ENCODE measurements at regions of chr2 and their contacts with region 1.

Region 1: DNA sequence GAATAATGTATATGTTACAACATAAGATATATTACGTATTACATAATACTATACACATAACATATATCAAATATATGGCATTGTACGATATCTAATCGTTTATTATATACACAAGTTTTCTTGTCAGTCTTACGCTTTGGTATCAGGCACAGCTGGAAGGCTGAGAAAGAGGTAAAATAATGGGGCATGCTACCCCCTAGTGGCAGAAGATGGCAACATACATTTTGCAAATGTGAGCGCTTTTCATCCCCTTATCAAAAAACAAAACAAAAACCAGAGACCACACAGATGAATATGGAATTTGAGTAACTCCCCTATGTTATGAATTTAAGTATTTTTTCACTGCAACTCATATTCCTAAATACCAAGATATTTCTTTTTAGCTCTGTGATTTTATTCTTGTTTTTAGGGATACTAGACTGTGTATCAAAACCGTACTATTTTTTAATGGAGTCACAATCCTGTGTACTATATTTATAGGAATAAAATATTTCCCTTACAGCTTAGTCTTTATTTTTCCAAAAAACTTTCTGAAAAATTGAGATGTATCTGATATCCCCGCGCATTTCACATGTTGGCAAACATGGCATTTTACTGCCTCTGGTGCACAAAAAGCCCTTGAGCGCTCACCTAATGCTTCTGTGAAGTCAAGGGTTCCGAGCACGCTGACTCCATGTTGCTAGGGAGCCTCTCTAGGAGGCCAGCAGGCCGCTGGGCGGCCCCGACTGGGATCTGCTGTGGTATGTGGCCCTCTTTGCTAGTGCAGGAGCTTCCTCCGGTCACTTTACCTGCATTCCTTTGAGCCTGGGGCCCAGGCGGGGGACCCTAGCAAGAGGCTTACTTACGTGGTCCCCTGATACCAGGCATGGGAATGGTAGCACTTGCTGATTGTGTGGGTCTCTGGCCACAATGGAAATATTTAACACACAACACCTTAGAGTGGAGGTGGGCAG is 62.5 kb downstream of the SLC4A3 start:
- DNase-seq: peak in 1 of 2 donors; percentile 72
- H3K4me3 ChIP-seq: peak overlapping the region in 1 of 2 donors; percentile 52
- H3K27ac ChIP-seq: peak overlapping the region; percentile 87 to 88
- H3K4me1 ChIP-seq: peaks cover 6 to 30% of the 10 kb centered on the region in 2 donors
- H3K27me3 ChIP-seq: no peaks in the 10 kb centered on the region
- CTCF ChIP-seq: peak; percentile 60 to 74 (median 72)

Region 2: DNA sequence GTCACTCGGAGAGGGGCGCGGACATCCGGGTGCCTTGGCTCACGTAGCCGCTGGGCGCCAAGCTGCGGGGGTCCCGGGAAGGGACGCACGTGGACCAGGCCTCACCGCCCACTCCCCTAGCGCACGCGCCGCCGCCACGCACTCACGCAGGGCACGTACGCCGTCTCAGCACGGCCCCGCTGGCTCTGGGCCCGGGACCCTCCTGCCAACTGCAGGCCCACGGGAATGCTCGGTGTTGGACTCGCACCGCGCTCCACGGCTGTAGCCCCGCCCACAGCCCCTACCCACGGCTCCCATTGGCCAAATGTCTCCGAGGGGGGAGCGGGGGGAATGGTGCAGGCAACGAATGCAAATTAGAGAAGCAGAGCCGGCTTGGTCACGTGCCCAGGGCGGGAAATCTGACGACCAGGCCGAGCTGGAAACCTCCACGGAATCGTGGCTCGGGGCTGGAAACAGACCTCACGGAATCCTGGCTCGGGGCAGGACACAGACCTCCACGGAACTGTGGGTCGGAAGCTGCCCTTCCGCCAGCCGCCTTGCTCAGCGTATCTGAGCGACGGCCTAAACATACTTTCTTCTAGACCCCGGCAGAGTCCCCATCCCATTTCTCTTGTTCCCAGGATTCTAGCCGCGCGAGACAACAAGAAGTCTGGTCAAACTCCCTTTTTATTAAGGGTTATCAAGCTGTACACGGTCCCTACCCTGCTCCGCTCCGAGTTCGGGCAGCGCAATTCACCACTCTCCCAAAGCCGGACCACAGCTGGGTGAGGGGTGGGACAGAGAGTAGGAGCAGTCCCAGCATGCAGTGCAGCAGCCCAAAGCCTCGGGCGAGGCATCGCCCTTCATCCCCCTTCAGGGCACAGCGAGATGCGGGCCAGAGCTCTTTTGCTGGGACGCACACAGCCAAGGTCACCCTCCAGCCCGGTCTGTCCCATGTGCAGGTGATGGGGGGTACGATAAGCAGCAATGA is 470.9 kb before region 1 on chr2 and contains the start of gene ABCB6:
- intact Hi-C with region 1: loop called (anchors 10 kb)
- DNase-seq: peak; percentile 93 to 99
- H3K4me3 ChIP-seq: peak within 1 kb of the TSS; percentile 64 to 68
- H3K27ac ChIP-seq: peak within 1 kb of the TSS; percentile 92 to 95
- H3K4me1 ChIP-seq: peaks cover 12 to 31% of the 10 kb centered on the region in 2 donors
- H3K27me3 ChIP-seq: no peaks in the 10 kb centered on the region
- CTCF ChIP-seq: no peak
- total RNA-seq, gene ABCB6: 17.9 TPM

Region 3: DNA sequence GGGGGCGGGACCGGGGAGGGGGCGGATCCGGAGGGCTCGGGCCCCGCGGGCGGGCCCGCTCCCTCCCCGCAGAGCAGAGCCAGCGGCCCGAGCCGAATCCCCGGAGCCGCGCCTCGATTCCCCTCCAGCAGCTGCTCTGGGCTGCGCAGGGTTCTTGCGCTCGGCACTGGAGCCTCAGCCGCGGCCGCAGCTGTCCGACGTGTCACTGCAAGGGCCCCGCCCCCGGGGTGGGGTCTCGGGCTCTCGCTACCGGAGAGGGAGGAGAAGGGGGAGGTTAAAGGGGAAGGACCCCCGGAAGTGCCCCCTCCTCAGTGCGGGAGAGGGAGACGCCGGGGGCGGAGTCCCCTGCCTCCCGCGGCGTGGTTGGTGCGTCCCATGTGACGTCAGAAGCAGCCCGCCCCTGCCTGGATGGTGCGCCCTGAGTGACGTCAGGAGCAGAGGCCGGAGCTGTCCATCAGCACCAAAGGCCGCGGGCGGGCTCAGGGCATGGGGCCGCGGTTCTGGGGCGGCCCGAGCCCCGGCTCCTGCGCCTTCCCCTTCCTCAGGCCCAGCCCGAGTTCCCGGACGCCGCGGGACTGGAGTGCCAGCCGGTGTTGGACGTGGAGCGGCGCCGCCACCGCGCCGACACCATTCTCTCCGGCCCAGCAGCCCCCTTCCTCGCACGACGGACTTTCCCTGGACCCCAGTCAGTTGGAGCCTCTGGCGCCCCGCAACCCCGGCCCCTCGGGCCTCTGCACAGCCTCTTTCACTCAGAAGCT is 146.2 kb before region 1 on chr2 and contains the starts of genes CHPF and TMEM198:
- intact Hi-C with region 1: loop called (anchors 1 kb)
- DNase-seq: peak; percentile 96 to 99
- H3K4me3 ChIP-seq: peak within 1 kb of the TSS; percentile 87 to 90
- H3K27ac ChIP-seq: peak within 1 kb of the TSS; percentile 92 to 95
- H3K4me1 ChIP-seq: peaks cover 8 to 24% of the 10 kb centered on the region in 2 donors
- H3K27me3 ChIP-seq: no peaks in the 10 kb centered on the region
- CTCF ChIP-seq: no peak
- total RNA-seq, gene CHPF: 249 TPM
- total RNA-seq, gene TMEM198: 6.0 TPM

Region 4: DNA sequence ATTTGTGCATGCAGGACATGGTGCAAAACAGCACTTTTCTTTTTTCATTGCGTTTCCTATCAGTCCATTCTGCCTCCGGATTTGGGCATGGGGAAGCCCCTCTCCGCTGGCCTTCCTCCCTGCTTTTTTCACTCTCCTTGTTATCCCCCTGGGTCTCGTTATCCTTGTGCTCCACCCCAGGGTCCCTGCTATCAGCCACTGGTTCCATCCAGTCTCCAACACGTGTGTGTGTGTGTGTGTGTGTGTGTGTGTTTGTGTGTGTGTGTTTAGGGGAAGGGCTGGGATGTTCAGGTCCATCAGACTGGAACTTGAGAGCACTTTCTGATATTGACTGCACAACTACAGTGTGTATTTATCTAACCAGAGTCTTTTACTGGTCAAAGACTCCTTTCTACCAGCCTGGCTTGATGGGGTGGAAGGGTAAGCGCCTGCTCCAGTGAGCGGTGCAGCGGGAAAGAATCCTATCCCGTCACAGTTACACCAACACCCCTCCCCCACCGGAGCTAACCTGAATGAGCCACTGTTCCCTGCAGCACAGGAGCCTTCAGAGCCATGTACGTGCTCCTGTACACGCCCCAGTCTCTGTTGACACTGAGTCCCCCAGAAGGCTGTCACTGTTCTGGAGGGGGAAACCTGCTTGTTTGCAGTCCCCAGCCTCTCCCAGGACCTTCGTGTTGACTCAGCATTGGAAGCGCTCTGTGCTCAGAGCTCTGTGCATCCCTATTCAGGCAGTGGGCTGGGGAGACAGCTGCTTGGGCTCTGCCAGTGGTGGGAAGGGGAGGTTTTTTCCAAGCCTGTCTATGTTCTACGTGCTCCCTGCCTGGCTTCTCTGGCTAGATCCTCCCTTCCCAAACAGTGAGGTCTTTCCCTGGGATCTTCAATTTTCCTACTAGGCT is 113.2 kb before region 1 on chr2:
- intact Hi-C with region 1: no loop called
- DNase-seq: no peak
- H3K4me3 ChIP-seq: no peak overlapping the region
- H3K27ac ChIP-seq: no peak overlapping the region
- H3K4me1 ChIP-seq: peaks cover 0 to 3% of the 10 kb centered on the region in 2 donors
- H3K27me3 ChIP-seq: no peaks in the 10 kb centered on the region
- CTCF ChIP-seq: no peak

Region 5: GRCh38 chr2:219642465-219643080 is 47.4 kb before region 1 on chr2:
- intact Hi-C with region 1: loop called (anchors 1 kb)
- DNase-seq: peak; percentile 90 to 99
- H3K4me3 ChIP-seq: no peak overlapping the region
- H3K27ac ChIP-seq: no peak overlapping the region
- H3K4me1 ChIP-seq: peaks cover 0 to 12% of the 10 kb centered on the region in 2 donors
- H3K27me3 ChIP-seq: no peaks in the 10 kb centered on the region
- CTCF ChIP-seq: peak; percentile 99 to 100 (median 99)

Region 6: GRCh38 chr2:219661197-219661954 is 28.6 kb before region 1 on chr2:
- intact Hi-C with region 1: no loop called
- DNase-seq: no peak
- H3K4me3 ChIP-seq: no peak overlapping the region
- H3K27ac ChIP-seq: no peak overlapping the region
- H3K4me1 ChIP-seq: peaks cover 0 to 4% of the 10 kb centered on the region in 2 donors
- H3K27me3 ChIP-seq: no peaks in the 10 kb centered on the region
- CTCF ChIP-seq: no peak

Region 7: GRCh38 chr2:220015576-220015975 is 325.6 kb after region 1 on chr2:
- intact Hi-C with region 1: no loop called
- DNase-seq: no peak
- H3K4me3 ChIP-seq: no peak overlapping the region
- H3K27ac ChIP-seq: no peak overlapping the region
- H3K4me1 ChIP-seq: no peaks in the 10 kb centered on the region
- H3K27me3 ChIP-seq: no peaks in the 10 kb centered on the region
- CTCF ChIP-seq: no peak